Spleen (tissue), 13 donors: ENCODE measurements at regions of chr13 and their contacts with region 1.

Region 1: DNA sequence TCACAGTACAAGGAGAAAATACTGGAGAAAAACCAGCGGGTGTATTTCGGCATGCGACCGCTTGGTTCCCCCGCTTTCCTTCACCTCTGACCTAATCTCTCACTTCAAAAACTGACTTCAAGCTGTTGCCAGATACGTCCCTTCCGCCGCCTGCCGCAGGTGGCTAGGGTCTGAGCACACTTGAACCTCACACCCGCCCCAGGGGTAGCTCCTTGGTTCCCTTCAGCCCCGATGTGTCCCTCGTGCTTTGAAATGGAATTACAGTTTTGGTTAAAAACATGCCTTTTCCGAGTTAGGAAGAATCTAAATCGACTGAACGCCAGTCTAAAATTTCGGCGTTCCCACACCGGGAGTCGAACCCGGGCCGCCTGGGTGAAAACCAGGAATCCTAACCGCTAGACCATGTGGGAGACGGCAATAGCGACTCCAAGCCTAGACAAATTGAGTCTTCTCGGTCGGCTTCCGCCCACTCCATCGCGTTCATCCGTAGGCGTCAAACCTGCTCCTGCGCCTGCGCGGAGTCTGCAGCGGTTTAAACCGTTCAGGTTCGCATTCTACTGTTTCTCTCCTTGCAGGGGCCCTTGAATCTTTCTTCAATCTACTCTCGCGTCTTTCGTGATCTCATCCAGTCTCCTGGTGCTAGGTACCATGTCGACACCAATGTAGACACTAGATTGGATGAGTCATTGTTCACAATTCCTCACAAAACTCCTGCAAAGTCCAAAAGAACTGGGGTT is 71.5 kb downstream of the NUFIP1 start:
- DNase-seq: peak; percentile 98
- H3K4me3 ChIP-seq: peak overlapping the region; percentile 40 to 73 (median 49)
- H3K27ac ChIP-seq: peak overlapping the region; percentile 81 to 97 (median 94)
- H3K4me1 ChIP-seq: peaks cover 13 to 37% (median 26%) of the 10 kb centered on the region in 6 donors
- H3K27me3 ChIP-seq: no peaks in the 10 kb centered on the region
- CTCF ChIP-seq: peak in 8 of 11 experiments; percentile 31 to 76 (median 58)
- POLR2A ChIP-seq: peak in 1 of 3 donors; percentile 9

Region 2: GRCh38 chr13:44577236-44578066 is 340.3 kb before region 1 on chr13:
- intact Hi-C with region 1: loop called (anchors 10 kb)
- DNase-seq: peak; percentile 99
- H3K4me3 ChIP-seq: peak overlapping the region; percentile 67 to 89 (median 86)
- H3K27ac ChIP-seq: peak overlapping the region; percentile 89 to 98 (median 96)
- H3K4me1 ChIP-seq: peaks cover 11 to 53% (median 33%) of the 10 kb centered on the region in 6 donors
- H3K27me3 ChIP-seq: no peaks in the 10 kb centered on the region
- CTCF ChIP-seq: no peak
- POLR2A ChIP-seq: peak in 1 of 3 donors; percentile 69

Region 3: DNA sequence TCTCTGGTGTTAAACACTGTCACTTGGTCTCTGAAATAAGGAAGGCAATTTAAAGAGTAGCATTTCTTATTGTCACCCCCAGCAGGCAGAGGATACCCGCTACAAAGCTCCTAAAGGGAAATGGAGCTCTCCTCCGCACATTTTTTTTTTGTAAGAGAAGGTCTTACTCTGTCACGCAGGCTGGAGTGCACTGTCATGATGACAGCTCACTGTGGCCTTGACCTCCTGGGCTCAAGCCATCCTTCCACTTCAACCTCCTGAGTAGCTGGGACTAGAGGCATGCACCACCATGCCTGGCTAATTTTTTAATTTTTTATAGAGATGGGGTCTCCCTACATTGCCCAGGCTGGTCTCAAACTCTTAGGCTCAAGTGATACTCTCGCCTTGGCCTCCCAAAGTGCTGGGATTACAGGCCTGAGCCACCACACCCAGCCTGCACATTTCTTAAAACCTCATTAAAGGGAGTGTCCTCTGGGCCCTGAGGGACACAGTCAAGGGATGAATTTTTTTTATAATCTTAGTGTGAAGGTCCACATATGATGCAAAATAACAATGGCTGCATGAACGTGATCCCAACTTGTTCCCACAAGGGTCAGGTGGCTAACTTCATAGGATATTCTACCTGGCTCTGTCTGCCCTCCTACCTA is 468.3 kb after region 1 on chr13:
- intact Hi-C with region 1: no loop called
- DNase-seq: no peak
- H3K4me3 ChIP-seq: no peak overlapping the region
- H3K27ac ChIP-seq: no peak overlapping the region
- H3K4me1 ChIP-seq: no peaks in the 10 kb centered on the region
- H3K27me3 ChIP-seq: no peaks in the 10 kb centered on the region
- CTCF ChIP-seq: no peak
- POLR2A ChIP-seq: no peak